HepG2 (cell line): ENCODE measurements at regions of chr17 and their contacts with region 1.

Region 1: DNA sequence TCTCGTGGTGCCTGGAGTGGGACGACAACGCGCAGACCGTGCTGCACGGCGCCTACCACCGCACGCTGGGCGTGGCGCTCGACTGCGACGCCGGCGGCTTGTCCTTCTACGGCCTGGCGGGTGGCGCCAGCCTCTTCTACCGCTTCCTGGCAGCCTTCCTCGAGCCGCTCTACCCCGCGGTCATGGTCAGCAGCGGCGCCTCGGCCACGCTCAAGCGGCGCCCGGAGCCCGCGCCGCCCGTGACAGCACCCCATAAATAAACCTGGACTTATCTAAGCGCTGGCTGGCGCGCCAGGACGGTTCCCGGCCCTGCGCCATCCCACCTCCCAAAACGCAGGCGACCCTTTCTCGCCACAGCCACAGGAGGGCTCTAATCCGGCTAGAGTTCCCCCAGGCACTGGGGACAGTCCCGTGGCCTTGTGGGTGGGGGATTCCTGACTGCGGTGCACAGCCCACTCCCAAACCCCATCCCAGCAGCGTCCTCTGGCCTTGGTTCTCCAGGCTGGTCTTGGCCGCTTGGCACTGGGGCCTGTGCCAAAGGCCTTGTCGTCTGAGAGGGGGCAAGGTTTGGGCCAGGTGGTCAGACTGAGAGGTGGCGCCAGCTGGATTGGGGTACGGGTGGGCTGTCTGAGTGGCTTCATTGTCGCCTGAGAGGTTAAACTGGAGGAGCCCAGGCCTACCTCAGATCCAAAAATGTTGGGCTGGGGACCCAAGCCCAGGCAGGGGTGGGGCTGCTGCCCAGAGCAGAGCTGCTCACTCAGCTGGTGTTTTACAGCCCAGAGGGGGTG is 10.1 kb upstream of the SLC16A5 start:
- DNase-seq: no peak
- ATAC-seq: no peak; the same call in 2 of the 3 replicates
- H3K4me3 ChIP-seq: peak overlapping the region; percentile 32 to 66 (median 46); a peak in 5 of 6 replicates
- H3K27ac ChIP-seq: no peak overlapping the region
- H3K4me1 ChIP-seq: peaks cover 92% of the 10 kb centered on the region
- H3K27me3 ChIP-seq: peaks cover 0 to 37% of the 10 kb centered on the region in 2 experiments; a peak in 3 of 5 replicates
- CTCF ChIP-seq: peak; percentile 28; the same call in 1 of the 2 replicates
- EP300 ChIP-seq: no peak
- POLR2A ChIP-seq: no peak
- RAD21 ChIP-seq: no peak

Region 2: DNA sequence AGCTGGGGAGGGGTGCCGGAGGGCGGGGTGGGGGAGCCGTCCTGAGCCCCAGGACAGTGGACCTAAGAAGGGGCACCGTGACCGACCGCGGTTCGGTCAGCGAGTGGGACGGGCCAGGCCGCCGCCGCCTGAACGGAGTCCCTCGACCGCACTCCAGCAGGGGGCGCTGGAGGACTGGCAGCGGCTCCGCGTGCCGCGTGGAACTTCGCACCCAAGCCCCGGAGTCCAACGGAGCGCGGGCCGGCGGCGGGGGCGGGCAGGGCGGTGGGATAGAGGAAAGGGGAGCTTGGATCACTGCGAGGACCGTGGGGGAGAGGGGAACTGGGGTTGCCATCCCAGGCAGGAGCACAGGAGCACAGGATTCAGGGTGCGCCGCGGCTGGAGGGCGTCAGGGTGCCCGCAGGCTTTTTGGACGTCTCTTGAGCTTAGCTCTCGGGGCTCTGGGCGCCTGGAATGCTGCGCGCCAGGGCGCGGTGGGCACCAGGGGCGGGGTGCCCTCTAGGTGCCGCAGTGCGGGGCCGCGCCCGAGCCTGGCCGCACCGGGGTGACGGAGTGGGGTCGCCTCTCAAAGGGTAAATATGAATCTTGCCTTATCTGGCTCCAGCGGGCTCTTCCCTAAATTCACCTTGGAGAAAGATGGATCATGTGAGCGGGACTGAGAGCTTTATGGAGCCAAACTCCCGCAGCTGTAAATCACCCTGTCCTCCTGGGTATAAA is 154.0 kb before region 1 on chr17:
- CTCF ChIA-PET with region 1: no interaction called
- POLR2A ChIA-PET with region 1: no interaction called
- in situ Hi-C with region 1: no loop called
- intact Hi-C with region 1: no loop called
- DNase-seq: no peak
- ATAC-seq: peak; percentile 63
- H3K4me3 ChIP-seq: peak overlapping the region; percentile 30 to 53 (median 35); a peak in 4 of 6 replicates
- H3K27ac ChIP-seq: no peak overlapping the region
- H3K4me1 ChIP-seq: peaks cover 23% of the 10 kb centered on the region
- H3K27me3 ChIP-seq: peaks cover 23 to 79% of the 10 kb centered on the region in 2 experiments
- CTCF ChIP-seq: peak; percentile 91
- EP300 ChIP-seq: no peak
- POLR2A ChIP-seq: no peak
- RAD21 ChIP-seq: peak; percentile 89

Region 3: DNA sequence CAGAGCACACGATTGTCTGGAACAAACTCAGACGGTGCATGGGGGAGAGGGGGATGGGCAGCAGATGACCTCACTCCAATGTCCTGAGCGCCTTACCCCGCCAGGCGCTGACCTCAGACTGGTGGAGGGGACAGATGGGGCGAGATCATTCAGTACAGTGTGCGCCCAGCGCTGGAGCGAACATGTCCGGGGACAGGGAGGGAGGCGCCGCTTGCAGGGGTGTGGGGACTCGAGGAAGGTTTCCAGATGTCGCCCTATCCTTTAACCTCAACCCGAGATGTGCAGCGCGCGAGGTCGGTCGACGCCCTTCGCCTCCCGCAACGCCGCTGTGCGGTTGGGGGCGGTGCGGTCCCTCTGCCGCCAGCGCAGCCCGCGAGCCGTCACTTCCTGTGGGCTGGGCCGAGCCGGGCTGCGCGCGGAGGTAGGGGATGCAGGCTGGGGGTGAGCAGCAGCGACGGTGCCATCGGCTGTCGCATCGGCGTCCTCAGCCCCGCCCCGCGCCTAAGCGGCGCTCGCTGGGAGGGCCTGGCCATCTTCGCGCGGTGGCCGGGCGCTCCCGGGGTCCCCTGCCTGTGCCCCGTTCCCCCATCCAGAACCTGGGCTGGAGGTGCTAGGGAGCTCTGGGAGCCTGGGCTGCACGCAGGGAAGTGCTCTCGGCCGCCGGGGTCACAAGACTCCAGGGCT is 95.6 kb before region 1 on chr17:
- CTCF ChIA-PET with region 1: no interaction called
- POLR2A ChIA-PET with region 1: no interaction called
- in situ Hi-C with region 1: no loop called
- intact Hi-C with region 1: no loop called
- DNase-seq: peak; percentile 72
- ATAC-seq: peak; percentile 97
- H3K4me3 ChIP-seq: peak overlapping the region; percentile 72 to 88 (median 76)
- H3K27ac ChIP-seq: peak overlapping the region; percentile 29
- H3K4me1 ChIP-seq: peaks cover 32% of the 10 kb centered on the region
- H3K27me3 ChIP-seq: peaks cover 0 to 16% of the 10 kb centered on the region in 2 experiments; a peak in 3 of 5 replicates
- CTCF ChIP-seq: peak; percentile 62
- EP300 ChIP-seq: no peak; a peak in 1 of 4 replicates
- POLR2A ChIP-seq: peak; percentile 74 to 95
- RAD21 ChIP-seq: peak; percentile 71

Region 4: DNA sequence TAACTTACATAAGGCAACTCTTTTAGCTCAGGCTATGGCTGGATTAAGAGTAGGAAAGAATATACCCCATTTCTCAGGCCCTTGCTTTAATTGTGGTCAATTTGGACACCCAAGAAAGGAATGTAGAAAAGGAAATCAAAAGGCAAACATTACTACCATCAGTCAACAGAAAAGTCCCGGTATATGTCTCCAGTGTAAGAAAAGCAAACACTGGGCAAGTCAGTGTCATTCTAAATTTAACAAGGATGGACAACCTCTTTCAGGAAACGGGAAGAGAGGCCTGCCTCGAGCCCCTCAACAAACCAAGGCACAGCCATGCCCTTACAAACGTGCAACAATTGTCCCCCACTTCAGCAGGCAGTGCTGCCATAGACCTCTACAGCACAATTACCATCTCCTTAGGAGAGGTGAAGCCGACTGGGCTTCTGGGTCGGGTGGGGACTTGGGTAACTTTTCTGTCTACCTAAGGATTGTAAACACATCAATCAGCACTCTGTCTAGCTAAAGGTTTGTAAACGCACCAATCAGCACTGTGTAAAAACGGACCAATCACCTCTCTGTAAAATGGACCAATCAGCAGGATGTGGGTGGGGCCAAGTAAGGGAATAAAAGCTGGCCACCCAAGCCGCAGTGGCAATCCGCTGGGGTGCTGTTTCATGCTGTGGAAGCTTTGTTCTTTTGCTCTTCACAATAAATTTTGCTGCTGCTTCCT is 52.8 kb before region 1 on chr17:
- CTCF ChIA-PET with region 1: no interaction called
- POLR2A ChIA-PET with region 1: no interaction called
- in situ Hi-C with region 1: no loop called
- intact Hi-C with region 1: no loop called
- DNase-seq: peak; percentile 61
- ATAC-seq: peak; percentile 75
- H3K4me3 ChIP-seq: peak overlapping the region in 1 of 3 experiments; percentile 46; a peak in 3 of 6 replicates
- H3K27ac ChIP-seq: peak overlapping the region; percentile 43
- H3K4me1 ChIP-seq: peaks cover 25% of the 10 kb centered on the region
- H3K27me3 ChIP-seq: peaks cover 0 to 3% of the 10 kb centered on the region in 2 experiments; a peak in 1 of 5 replicates
- CTCF ChIP-seq: no peak
- EP300 ChIP-seq: no peak
- POLR2A ChIP-seq: peak; percentile 56 to 60; a peak in 2 of 4 replicates
- RAD21 ChIP-seq: no peak

Region 5: DNA sequence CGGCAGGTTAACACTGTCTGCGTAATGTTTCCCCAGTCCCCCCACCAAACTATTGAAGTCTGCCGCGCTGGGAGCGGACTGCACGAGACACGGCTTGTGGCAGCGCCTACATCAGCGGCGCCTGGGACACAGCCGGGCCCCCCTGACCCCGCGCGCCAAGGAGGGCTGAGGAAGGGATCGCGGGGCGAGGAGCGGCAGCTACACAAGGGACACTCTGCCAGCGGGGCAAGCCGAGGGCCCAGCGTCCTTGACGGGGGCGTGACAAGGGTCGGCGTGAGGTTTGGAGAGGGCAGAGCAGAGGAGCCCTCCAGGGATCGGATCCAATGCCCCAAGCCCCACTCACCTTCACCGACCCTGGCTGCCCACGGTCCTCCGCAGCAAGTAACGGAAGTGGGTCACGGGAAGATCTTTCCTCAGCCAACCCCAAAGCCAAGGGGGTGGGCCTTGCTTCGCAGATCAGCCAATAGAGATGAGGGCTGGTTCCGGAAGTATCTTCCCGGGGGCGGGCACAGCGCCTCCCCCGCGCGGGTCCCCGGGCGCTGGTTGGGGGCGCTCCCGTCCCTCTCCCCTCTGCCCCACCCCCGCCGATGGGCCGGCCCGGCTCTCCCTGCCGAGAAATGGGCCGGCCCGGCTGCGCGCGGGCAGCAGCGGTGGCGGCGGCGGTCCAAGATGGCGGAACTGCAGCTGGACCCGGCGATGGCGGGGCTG is 31.0 kb before region 1 on chr17 and contains the starts of genes ATP5PD and KCTD2:
- CTCF ChIA-PET with region 1: no interaction called
- POLR2A ChIA-PET with region 1: interaction called, 12 read pairs
- in situ Hi-C with region 1: no loop called
- intact Hi-C with region 1: no loop called
- DNase-seq: peak; percentile 97
- ATAC-seq: peak; percentile 98
- H3K4me3 ChIP-seq: peak within 1 kb of the TSS; percentile 75 to 98 (median 90)
- H3K27ac ChIP-seq: peak within 1 kb of the TSS; percentile 92
- H3K4me1 ChIP-seq: peaks cover 29% of the 10 kb centered on the region
- H3K27me3 ChIP-seq: no peaks in the 10 kb centered on the region; a peak in 1 of 5 replicates
- CTCF ChIP-seq: peak; percentile 40
- EP300 ChIP-seq: peak in 1 of 2 experiments; percentile 56; a peak in 1 of 4 replicates
- POLR2A ChIP-seq: peak; percentile 98 to 99
- RAD21 ChIP-seq: peak; percentile 18
- total RNA-seq, gene ATP5PD: 428 and 565 TPM in 2 replicates
- total RNA-seq, gene KCTD2: 27.5 and 28.3 TPM in 2 replicates

Region 6: DNA sequence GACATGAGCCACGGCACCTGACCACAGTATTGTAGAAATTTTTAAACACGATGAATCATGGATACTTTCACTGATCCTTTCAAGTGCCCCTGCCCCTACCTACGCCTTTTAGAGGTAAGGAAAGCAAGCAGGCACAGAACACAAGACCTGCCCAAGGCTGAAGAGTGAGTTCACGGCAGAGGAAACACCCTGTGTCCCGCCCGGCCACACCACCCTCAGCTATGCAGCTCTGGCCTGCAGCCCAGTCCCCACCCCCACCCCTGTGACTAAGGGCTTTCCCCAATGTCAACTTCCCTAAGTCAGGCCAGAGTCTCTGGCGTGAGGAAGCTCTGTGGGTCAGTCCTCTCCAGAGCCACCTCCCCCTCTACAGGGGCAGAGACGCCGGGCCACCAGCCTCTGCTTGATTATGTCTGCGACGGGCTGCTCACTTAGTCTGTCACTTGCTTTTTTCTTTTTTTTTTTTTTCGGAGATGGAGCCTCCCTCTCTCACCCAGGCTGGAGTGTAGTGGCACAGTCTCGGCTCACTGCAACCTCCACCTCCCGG is 18.5 kb after region 1 on chr17:
- CTCF ChIA-PET with region 1: no interaction called
- POLR2A ChIA-PET with region 1: interaction called, 19 read pairs
- in situ Hi-C with region 1: no loop called
- intact Hi-C with region 1: no loop called
- DNase-seq: peak; percentile 91
- ATAC-seq: peak; percentile 66
- H3K4me3 ChIP-seq: peak overlapping the region in 1 of 3 experiments; percentile 22; a peak in 1 of 6 replicates
- H3K27ac ChIP-seq: no peak overlapping the region
- H3K4me1 ChIP-seq: peaks cover 61% of the 10 kb centered on the region
- H3K27me3 ChIP-seq: peaks cover 3 to 25% of the 10 kb centered on the region in 2 experiments; a peak in 3 of 5 replicates
- CTCF ChIP-seq: peak; percentile 14
- EP300 ChIP-seq: peak; percentile 69 to 79; a peak in 3 of 4 replicates
- POLR2A ChIP-seq: 0 out of 4 replicates have a peak, but pooled peaks of 1 of the 2 experiments have one; percentile 26
- RAD21 ChIP-seq: peak; percentile 24; the same call in 1 of the 2 replicates

Region 7: GRCh38 chr17:75181110-75181509 is 103.4 kb after region 1 on chr17:
- CTCF ChIA-PET with region 1: no interaction called
- POLR2A ChIA-PET with region 1: no interaction called
- in situ Hi-C with region 1: no loop called
- intact Hi-C with region 1: no loop called
- DNase-seq: no peak
- ATAC-seq: no peak
- H3K4me3 ChIP-seq: peak overlapping the region; percentile 92 to 98 (median 96); a peak in 5 of 6 replicates
- H3K27ac ChIP-seq: peak overlapping the region; percentile 96
- H3K4me1 ChIP-seq: peaks cover 40% of the 10 kb centered on the region
- H3K27me3 ChIP-seq: no peaks in the 10 kb centered on the region; a peak in 1 of 5 replicates
- CTCF ChIP-seq: no peak
- EP300 ChIP-seq: no peak
- POLR2A ChIP-seq: no peak
- RAD21 ChIP-seq: no peak